ENCODE measurements at regions of chr9 and their contacts with region 1.

Region 1: GRCh38 chr9:92133949-92134604 is 18.9 kb upstream of the SPTLC1 start:
- DNase-seq: peak; percentile 91
- ATAC-seq: peak; percentile 92
- H3K4me3 Mint-ChIP-seq: peak overlapping the region; percentile 15
- H3K27ac Mint-ChIP-seq: no peak overlapping the region
- H3K4me1 Mint-ChIP-seq: peaks cover 4% of the 10 kb centered on the region
- H3K27me3 Mint-ChIP-seq: peaks cover 22% of the 10 kb centered on the region

Region 2: GRCh38 chr9:91727316-91727861 is 406.7 kb before region 1 on chr9:
- CTCF ChIA-PET with region 1: no interaction called
- POLR2A ChIA-PET with region 1: no interaction called
- intact Hi-C with region 1: no loop called
- DNase-seq: peak; percentile 64
- ATAC-seq: peak; percentile 96
- H3K4me3 Mint-ChIP-seq: no peak overlapping the region
- H3K27ac Mint-ChIP-seq: no peak overlapping the region
- H3K4me1 Mint-ChIP-seq: no peaks in the 10 kb centered on the region
- H3K27me3 Mint-ChIP-seq: peaks cover 3% of the 10 kb centered on the region

Region 3: GRCh38 chr9:92242260-92243136 is 108.4 kb after region 1 on chr9:
- CTCF ChIA-PET with region 1: interaction called, 14 read pairs
- POLR2A ChIA-PET with region 1: no interaction called
- intact Hi-C with region 1: loop called in 1 of 2 experiments (anchors 10 kb)
- DNase-seq: no peak
- ATAC-seq: peak; percentile 30
- H3K4me3 Mint-ChIP-seq: no peak overlapping the region
- H3K27ac Mint-ChIP-seq: no peak overlapping the region
- H3K4me1 Mint-ChIP-seq: peaks cover 6% of the 10 kb centered on the region
- H3K27me3 Mint-ChIP-seq: no peaks in the 10 kb centered on the region

Region 4: GRCh38 chr9:92634712-92635605 is 500.9 kb after region 1 on chr9:
- CTCF ChIA-PET with region 1: interaction called, 8 read pairs
- POLR2A ChIA-PET with region 1: no interaction called
- intact Hi-C with region 1: loop called (anchors 1 to 5 kb)
- DNase-seq: peak; percentile 83
- ATAC-seq: peak; percentile 69
- H3K4me3 Mint-ChIP-seq: no peak overlapping the region
- H3K27ac Mint-ChIP-seq: no peak overlapping the region
- H3K4me1 Mint-ChIP-seq: peaks cover 6% of the 10 kb centered on the region
- H3K27me3 Mint-ChIP-seq: no peaks in the 10 kb centered on the region

Region 5: DNA sequence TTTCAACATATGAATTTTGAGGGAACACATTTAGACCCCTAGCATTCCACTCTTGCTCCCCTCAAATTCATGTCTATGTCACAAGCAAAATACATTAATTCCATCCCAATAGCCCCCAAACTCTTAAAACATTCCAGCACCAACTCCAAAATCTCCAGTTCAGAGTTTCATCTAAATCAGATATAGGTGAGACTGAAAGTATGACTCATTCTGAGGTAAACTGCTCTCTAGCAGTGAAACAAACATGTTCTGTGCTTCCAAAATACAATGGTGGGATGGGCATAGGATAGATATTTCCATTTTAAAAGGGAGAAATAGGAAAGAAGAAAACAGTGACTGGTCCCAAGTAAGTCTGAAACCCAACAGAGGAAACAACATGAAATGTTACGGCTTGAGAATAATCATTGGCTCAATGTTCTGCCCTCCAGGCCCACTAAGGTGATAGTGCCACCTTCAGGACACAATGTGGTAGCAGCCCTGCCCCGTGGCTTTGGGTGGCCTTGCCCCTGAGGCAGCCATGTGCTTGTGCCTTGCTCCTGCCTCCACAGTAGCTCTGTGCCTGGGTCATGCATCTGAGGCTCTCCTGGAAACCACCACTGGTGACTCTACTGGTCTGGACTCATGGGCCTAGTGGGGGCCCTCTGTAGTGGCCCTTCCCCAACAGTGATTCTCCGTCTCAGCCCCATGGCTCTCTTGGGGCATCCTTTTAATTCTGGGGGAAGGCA is 572.3 kb after region 1 on chr9:
- CTCF ChIA-PET with region 1: no interaction called
- POLR2A ChIA-PET with region 1: no interaction called
- intact Hi-C with region 1: loop called in 1 of 2 experiments (anchors 5 kb)
- DNase-seq: peak; percentile 72
- ATAC-seq: peak; percentile 93
- H3K4me3 Mint-ChIP-seq: no peak overlapping the region
- H3K27ac Mint-ChIP-seq: peak overlapping the region; percentile 1
- H3K4me1 Mint-ChIP-seq: peaks cover 21% of the 10 kb centered on the region
- H3K27me3 Mint-ChIP-seq: no peaks in the 10 kb centered on the region

Region 6: DNA sequence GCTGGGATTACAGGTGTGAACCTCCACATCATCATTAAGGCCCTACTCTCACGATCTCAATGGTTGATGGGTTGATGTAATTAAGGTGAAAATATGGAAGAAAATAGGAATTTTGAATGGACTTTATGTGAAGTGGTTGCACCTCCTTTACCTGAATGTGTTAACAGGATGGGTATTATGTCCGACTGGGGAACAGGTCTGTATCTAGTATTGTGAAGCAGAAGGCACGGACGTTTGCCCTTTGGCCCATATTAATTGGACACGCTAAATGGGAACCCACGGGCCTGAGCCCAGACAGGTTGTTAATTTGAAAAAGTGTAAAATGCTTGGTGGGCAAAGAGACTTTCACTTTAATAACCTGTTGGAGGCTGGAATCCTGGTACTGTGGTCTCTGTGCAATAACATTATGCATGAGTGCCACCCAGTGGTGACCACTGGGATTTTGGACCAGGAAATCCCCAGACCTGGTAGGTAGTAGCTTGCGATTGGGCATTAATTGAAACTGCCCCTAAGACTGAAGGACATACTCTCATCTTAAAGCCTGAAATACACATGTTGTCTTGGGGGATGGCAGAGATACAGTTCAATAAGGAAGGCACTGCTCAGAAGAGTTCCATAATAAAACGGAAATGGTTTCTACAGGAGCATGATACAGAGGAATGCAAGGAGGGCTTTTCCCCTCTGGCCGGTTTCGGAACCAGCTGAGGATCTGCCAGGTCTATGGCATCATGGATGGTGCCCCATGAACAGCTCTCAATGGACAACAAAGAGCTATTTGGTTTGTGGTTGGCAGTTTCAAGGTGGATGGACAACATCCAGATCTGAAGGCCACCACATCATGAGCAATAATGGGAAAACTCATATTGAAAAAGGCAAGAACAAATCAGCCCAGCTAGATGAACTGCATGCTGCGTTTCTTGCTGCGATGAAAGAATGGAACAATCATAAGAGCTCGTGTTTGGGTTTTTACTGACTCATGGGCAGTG is 656.8 kb after region 1 on chr9:
- CTCF ChIA-PET with region 1: interaction called, 3 read pairs
- POLR2A ChIA-PET with region 1: no interaction called
- intact Hi-C with region 1: loop called in 1 of 2 experiments (anchors 2 kb)
- DNase-seq: peak; percentile 84
- ATAC-seq: peak; percentile 87
- H3K4me3 Mint-ChIP-seq: no peak overlapping the region
- H3K27ac Mint-ChIP-seq: no peak overlapping the region
- H3K4me1 Mint-ChIP-seq: peaks cover 9% of the 10 kb centered on the region
- H3K27me3 Mint-ChIP-seq: no peaks in the 10 kb centered on the region